HEK293 (cell line): ENCODE measurements at regions of chr1 and their contacts with region 1.

Region 1: DNA sequence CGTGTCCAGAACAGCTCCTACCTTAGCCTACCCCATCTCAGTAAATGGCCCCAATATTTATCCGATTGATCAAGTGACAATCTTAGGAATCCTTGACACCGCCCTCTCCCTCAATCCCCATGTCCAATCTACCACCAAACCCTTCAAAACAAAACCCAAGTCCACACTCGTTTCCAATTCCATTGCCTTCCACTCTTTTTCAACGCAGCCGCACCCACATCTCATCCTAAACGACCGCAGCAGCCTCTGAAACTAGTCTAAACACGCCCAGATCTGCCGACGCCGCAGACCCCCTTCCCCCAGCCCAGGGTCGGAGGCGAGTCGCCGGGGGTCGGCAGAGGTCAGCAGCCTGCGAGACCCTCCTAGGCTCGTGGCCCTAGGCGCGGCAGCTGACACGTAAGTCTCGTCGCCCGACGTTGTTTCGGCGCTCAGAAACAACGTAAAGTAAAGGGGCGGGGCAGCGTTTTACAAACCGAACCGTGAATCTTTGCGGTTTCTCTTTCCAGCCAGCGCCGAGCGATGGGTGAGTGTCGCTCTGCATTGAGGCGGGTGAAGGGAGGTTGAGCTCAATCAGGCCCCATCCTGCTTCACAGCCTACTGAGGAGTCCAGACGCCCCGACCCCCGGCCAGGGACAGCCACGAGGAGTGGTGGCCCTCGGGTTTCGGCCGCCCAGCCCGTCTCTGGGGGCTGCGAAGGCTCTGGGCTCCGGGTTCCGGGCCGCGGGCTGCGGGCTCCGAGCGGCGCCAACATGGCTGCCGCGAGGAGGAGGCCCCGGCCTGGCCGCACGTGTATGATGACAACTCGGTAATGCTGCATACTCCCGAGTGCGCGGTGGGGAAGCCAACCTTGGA is at the start of gene RPS8:
- H3K4me3 ChIP-seq: peak within 1 kb of the TSS; percentile 63
- H3K27ac ChIP-seq: peak within 1 kb of the TSS; percentile 99
- H3K4me1 ChIP-seq: no peaks in the 10 kb centered on the region
- CTCF ChIP-seq: no peak

Region 2: GRCh38 chr1:44730741-44731512 is 44.4 kb before region 1 on chr1 and contains the start of gene RNU5D-1:
- CTCF ChIA-PET with region 1: interaction called, 6 read pairs
- POLR2A ChIA-PET with region 1: interaction called, 28 read pairs
- H3K4me3 ChIP-seq: no peak within 1 kb of the TSS; the same call in 1 of the 2 replicates
- H3K27ac ChIP-seq: peak within 1 kb of the TSS; percentile 94
- H3K4me1 ChIP-seq: no peaks in the 10 kb centered on the region
- CTCF ChIP-seq: peak; percentile 72; the same call in 1 of the 2 replicates

Region 3: GRCh38 chr1:44786138-44786840 is 11.0 kb after region 1 on chr1:
- CTCF ChIA-PET with region 1: interaction called, 11 read pairs
- POLR2A ChIA-PET with region 1: interaction called, 41 read pairs
- H3K4me3 ChIP-seq: peak overlapping the region; percentile 48
- H3K27ac ChIP-seq: peak overlapping the region; percentile 18; the same call in 1 of the 2 replicates
- H3K4me1 ChIP-seq: 0 out of 2 replicates have a peak, but pooled peaks cover 2% of the 10 kb centered on the region
- CTCF ChIP-seq: peak; percentile 99

Region 4: GRCh38 chr1:44807262-44808062 is 32.2 kb after region 1 on chr1 and contains the start of gene DYNLT4:
- CTCF ChIA-PET with region 1: no interaction called
- POLR2A ChIA-PET with region 1: interaction called, 20 read pairs
- H3K4me3 ChIP-seq: peak within 1 kb of the TSS; percentile 1
- H3K27ac ChIP-seq: peak within 1 kb of the TSS; percentile 72
- H3K4me1 ChIP-seq: peaks cover 19% of the 10 kb centered on the region
- CTCF ChIP-seq: no peak

Region 5: GRCh38 chr1:44848456-44849181 is 73.3 kb after region 1 on chr1:
- CTCF ChIA-PET with region 1: no interaction called
- POLR2A ChIA-PET with region 1: no interaction called
- H3K4me3 ChIP-seq: no peak overlapping the region
- H3K27ac ChIP-seq: no peak overlapping the region
- H3K4me1 ChIP-seq: no peaks in the 10 kb centered on the region
- CTCF ChIP-seq: no peak

Region 6: GRCh38 chr1:45339789-45340570 is 564.7 kb after region 1 on chr1 and contains the starts of genes MUTYH and TOE1:
- CTCF ChIA-PET with region 1: no interaction called
- POLR2A ChIA-PET with region 1: interaction called, 10 read pairs
- H3K4me3 ChIP-seq: peak within 1 kb of the TSS; percentile 67
- H3K27ac ChIP-seq: peak within 1 kb of the TSS; percentile 75
- H3K4me1 ChIP-seq: no peaks in the 10 kb centered on the region
- CTCF ChIP-seq: no peak